Activated CD4-positive, alpha-beta memory T cell treated with anti-CD3 and anti-CD28 coated beads for 36 hours (primary cell): ENCODE measurements at regions of chr3 and their contacts with region 1.

Region 1: DNA sequence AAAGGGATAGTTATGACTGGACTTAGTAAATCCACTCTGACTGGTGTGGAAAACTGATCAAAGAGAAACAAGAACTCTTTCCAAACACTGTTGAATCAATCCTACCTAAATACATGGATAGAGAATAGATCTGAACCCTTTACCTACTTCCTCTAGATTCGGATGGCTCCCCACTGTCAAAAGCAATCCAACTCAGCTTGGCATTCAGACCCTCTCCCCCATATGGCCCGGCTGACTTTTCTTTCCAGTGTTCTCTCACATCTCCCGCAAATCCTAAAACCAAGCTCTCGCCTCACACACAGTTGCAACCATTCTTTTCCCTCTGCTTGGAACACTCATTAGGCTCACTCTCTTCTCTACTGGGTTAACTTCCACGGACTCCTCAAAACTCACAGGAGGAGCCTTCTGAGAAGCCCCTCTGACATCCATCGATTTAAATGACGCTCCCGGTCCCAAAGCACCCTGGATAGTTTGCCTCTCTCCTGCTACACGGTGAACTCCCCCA is 639 bp downstream of the SPICE1 start:
- DNase-seq: no peak
- H3K4me3 Mint-ChIP-seq: no peak overlapping the region
- H3K27ac Mint-ChIP-seq: no peak overlapping the region
- H3K4me1 Mint-ChIP-seq: peaks cover 13% of the 10 kb centered on the region
- H3K27me3 Mint-ChIP-seq: peaks cover 18% of the 10 kb centered on the region

Region 2: GRCh38 chr3:112948346-112948838 is 565.9 kb before region 1 on chr3:
- CTCF ChIA-PET with region 1: no interaction called
- POLR2A ChIA-PET with region 1: no interaction called
- intact Hi-C with region 1: no loop called
- DNase-seq: no peak
- H3K4me3 Mint-ChIP-seq: no peak overlapping the region
- H3K27ac Mint-ChIP-seq: no peak overlapping the region
- H3K4me1 Mint-ChIP-seq: peaks cover 43% of the 10 kb centered on the region
- H3K27me3 Mint-ChIP-seq: no peaks in the 10 kb centered on the region

Region 3: DNA sequence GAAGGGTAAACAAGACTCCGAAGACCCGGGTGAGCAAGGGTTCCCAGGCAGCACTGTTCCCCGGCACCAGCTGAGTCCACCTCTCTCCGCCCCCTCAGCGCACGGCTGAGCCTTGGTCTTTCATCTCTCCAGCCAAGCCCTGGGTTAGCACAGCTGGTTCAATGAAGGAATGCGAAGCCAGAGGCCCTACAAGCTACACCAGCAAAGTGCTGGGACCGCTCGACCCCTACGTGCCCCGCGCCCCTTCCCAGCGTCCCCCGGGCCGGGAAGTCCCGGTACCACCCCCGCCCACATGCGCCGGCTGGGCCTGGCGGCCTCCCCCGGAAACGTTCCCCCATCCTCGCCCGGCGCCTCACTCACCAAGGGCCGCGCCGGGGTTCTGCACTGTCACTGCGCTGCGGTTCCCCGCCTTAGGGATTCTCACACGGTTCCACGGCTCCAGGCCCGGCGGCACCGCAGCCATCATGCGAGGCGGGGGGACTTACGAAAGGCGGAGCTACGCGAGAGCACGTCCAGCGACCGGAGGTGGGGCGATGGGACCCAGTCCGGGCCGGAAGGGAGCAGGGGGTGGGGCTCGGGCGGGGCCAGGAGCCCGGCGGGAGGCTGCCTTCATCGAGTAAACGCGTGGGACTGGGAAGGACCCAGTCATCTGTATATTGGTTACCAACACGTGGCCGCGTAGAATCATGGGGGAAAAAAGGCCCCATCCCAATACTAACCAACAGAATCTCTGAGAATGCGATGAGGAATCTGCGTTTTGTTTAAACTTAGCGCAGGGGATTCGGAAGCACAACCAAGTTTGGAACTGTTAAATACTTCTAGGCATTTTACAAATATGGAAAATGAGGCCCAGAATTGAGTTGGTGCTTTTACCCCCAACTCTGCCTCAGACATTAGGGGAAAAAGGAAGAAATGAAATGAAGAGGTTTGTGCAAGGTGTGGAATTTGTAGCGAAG is 494.9 kb before region 1 on chr3:
- CTCF ChIA-PET with region 1: no interaction called
- POLR2A ChIA-PET with region 1: interaction called, 4 read pairs
- intact Hi-C with region 1: loop called (anchors 1 kb)
- DNase-seq: peak; percentile 95
- H3K4me3 Mint-ChIP-seq: peak overlapping the region; percentile 93
- H3K27ac Mint-ChIP-seq: peak overlapping the region; percentile 97
- H3K4me1 Mint-ChIP-seq: peaks cover 55% of the 10 kb centered on the region
- H3K27me3 Mint-ChIP-seq: no peaks in the 10 kb centered on the region

Region 4: DNA sequence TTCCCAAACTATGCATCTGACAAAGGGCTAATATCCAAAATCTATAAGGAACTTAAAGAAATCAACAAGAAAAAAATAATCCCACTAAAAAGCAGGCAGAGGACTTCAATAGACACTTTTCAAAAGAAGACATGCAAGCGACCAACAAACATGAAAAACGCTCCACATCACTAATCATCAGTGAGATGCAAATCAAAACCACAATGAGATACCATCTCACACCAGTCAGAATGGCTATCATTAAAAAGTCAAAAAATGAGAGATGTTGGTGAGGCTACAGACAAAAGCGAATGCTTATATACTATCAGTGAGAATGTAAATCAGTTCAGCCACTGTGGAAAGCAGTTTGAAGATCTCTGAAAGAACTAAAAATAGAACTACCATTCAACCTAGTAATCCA is 93.2 kb before region 1 on chr3:
- CTCF ChIA-PET with region 1: no interaction called
- POLR2A ChIA-PET with region 1: no interaction called
- intact Hi-C with region 1: no loop called
- DNase-seq: no peak
- H3K4me3 Mint-ChIP-seq: no peak overlapping the region
- H3K27ac Mint-ChIP-seq: no peak overlapping the region
- H3K4me1 Mint-ChIP-seq: no peaks in the 10 kb centered on the region
- H3K27me3 Mint-ChIP-seq: no peaks in the 10 kb centered on the region

Region 5: DNA sequence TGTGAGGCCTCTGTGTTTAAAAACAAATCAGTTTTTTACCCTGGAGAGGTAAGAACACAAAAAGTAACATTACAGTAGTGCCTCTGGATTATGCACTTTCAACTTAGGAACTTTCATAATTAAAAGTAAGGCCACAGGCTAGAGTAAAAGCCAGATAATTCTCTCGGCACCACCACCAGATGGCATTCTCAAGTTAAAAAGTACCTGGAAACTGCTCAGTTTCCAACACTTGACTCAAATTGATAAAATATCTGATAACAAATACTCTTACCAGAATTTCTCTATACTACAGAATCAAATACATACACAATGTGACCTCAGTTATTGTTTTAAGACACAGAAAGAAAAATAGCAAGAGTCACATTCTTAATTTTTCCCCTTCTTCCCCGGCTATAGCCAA is 19.3 kb before region 1 on chr3:
- CTCF ChIA-PET with region 1: interaction called, 26 read pairs
- POLR2A ChIA-PET with region 1: interaction called, 7 read pairs
- intact Hi-C with region 1: no loop called
- DNase-seq: peak; percentile 40
- H3K4me3 Mint-ChIP-seq: no peak overlapping the region
- H3K27ac Mint-ChIP-seq: no peak overlapping the region
- H3K4me1 Mint-ChIP-seq: peaks cover 3% of the 10 kb centered on the region
- H3K27me3 Mint-ChIP-seq: no peaks in the 10 kb centered on the region

Region 6: GRCh38 chr3:113531826-113532697 is 17.7 kb after region 1 on chr3 and contains the start of gene SIDT1:
- CTCF ChIA-PET with region 1: interaction called, 7 read pairs
- POLR2A ChIA-PET with region 1: interaction called, 24 read pairs
- intact Hi-C with region 1: loop called (anchors 1 kb)
- DNase-seq: peak; percentile 79
- H3K4me3 Mint-ChIP-seq: peak within 1 kb of the TSS; percentile 98
- H3K27ac Mint-ChIP-seq: peak within 1 kb of the TSS; percentile 96
- H3K4me1 Mint-ChIP-seq: peaks cover 45% of the 10 kb centered on the region
- H3K27me3 Mint-ChIP-seq: peaks cover 1% of the 10 kb centered on the region
- total RNA-seq, gene SIDT1: 11.3 TPM

Region 7: GRCh38 chr3:113546414-113546893 is 32.1 kb after region 1 on chr3:
- CTCF ChIA-PET with region 1: interaction called, 3 read pairs
- POLR2A ChIA-PET with region 1: no interaction called
- intact Hi-C with region 1: loop called (anchors 5 kb)
- DNase-seq: no peak
- H3K4me3 Mint-ChIP-seq: peak overlapping the region; percentile 51
- H3K27ac Mint-ChIP-seq: peak overlapping the region; percentile 41
- H3K4me1 Mint-ChIP-seq: peaks cover 32% of the 10 kb centered on the region
- H3K27me3 Mint-ChIP-seq: no peaks in the 10 kb centered on the region

Region 8: DNA sequence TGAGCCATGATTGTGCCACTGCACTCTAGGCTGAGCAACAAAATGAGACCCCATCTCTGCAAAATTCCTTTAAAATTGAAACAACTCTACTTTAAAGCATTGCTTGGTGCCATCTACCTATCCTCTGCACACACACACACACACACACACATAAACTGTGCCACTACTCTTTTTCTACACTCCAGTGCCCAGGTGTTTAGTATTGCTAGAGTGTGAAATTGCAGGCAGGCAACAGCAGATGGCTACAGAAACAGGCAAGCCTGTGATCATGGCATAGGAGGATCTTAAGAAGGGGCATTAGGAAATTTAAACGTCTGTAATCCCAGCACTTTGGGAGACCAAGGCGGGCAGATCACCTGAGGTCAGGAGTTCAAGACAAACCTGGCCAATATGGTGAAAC is 57.0 kb after region 1 on chr3:
- CTCF ChIA-PET with region 1: no interaction called
- POLR2A ChIA-PET with region 1: no interaction called
- intact Hi-C with region 1: no loop called
- DNase-seq: no peak
- H3K4me3 Mint-ChIP-seq: no peak overlapping the region
- H3K27ac Mint-ChIP-seq: no peak overlapping the region
- H3K4me1 Mint-ChIP-seq: no peaks in the 10 kb centered on the region
- H3K27me3 Mint-ChIP-seq: no peaks in the 10 kb centered on the region

Region 9: DNA sequence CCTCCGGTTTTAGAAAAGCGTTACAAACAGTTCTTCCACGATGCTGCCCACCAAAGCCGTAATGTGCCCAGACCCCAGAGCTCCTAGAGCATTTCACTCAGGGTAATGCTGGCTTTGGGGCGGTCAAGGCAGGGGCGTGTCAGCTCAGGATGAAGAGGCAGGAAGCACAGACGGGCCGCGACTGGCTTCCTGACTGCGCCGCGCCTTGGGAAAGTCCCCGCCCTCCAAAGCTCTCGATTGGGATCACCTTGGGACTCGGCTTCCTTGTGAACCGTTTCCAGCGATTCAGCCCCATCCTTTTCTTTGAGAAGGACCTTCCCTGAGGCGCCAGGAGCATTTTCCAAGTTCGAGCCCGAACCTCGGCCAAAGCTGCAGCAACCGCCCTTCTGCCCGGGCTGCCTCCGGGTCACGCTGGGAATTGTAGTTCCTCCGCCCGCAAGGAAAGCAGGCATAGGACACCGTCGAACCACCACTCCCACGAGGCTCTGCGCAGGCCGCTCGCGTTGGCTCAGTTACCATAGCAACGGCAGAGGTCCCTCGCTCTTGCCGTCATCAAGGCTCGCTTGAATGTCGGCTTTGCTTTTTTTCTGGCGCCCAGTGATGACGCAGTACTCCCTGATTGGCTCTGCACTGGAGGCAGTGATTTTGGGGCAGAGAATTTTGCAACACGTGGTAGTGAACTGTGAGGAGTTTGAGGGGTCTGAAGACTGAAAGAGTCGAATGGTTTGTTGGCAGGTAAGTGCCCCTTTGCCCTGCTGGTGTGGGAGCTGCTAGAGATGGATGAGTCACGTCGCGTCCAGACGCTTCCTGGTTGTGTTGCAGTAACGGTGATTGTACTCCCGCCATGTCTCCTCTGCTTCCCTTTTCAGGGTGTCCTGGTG is 542.1 kb after region 1 on chr3 and contains the starts of genes CCDC191 and QTRT2:
- CTCF ChIA-PET with region 1: no interaction called
- POLR2A ChIA-PET with region 1: no interaction called
- intact Hi-C with region 1: loop called (anchors 10 kb)
- DNase-seq: peak; percentile 99
- H3K4me3 Mint-ChIP-seq: peak within 1 kb of the TSS; percentile 94
- H3K27ac Mint-ChIP-seq: peak within 1 kb of the TSS; percentile 89
- H3K4me1 Mint-ChIP-seq: peaks cover 28% of the 10 kb centered on the region
- H3K27me3 Mint-ChIP-seq: no peaks in the 10 kb centered on the region
- total RNA-seq, gene CCDC191: 3.5 TPM
- total RNA-seq, gene QTRT2: 27.2 to 30.7 TPM